ENCODE measurements at regions of chr1 and their contacts with region 1.

Region 1: DNA sequence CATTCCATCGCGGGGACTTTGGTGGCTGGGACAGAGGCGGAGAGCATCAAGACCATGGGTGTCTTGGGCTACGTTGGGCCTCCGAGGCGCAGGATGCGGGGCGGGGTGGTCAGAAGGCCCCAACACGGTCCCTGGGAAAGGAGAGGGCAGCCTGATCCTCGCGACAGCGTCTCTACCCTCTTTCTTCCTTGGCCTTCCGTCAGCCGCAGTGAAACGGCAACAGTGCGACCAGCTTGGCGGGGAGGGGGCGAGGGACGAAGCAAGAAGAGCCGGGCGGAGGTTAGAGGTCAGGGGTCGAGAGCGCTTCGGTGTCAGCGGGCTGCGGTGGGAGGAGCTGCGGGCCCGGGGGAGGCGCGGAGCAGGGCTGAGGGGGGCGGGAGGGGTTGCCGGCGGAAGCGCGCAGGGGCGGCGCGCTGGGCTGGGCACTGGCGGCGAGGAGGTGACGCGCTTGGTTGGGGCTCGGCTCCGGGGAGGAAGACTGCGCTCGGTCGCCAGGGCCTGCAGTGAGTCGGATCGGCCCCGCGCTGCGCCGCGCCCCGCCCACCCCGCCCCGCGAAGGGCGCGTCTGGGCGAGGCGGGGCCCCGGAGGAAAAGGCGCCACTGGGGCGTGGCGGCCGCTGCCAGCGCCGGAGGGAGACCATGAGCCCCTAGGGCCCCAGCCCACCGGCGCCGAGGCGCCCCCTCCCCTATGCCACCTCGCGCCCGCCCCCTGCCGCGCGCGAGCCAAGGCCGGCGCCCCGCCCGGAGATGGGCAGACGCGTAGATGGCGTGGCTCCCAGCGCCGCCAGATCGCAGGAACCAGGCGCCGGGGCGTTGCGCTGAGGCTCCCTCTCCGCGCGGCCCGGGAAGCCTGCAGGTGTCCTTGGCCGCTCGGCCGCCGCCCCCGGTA is at the start of gene KCNC4:
- DNase-seq: peak; percentile 87
- ATAC-seq: peak; percentile 75
- H3K4me3 Mint-ChIP-seq: peak within 1 kb of the TSS; percentile 82
- H3K27ac Mint-ChIP-seq: peak within 1 kb of the TSS; percentile 92
- H3K4me1 Mint-ChIP-seq: peaks cover 33% of the 10 kb centered on the region
- H3K27me3 Mint-ChIP-seq: peaks cover 22% of the 10 kb centered on the region
- CTCF ChIP-seq: no peak
- total RNA-seq, gene KCNC4: 19.9 to 21.9 TPM (median 21.9 TPM) in 3 replicates

Region 2: DNA sequence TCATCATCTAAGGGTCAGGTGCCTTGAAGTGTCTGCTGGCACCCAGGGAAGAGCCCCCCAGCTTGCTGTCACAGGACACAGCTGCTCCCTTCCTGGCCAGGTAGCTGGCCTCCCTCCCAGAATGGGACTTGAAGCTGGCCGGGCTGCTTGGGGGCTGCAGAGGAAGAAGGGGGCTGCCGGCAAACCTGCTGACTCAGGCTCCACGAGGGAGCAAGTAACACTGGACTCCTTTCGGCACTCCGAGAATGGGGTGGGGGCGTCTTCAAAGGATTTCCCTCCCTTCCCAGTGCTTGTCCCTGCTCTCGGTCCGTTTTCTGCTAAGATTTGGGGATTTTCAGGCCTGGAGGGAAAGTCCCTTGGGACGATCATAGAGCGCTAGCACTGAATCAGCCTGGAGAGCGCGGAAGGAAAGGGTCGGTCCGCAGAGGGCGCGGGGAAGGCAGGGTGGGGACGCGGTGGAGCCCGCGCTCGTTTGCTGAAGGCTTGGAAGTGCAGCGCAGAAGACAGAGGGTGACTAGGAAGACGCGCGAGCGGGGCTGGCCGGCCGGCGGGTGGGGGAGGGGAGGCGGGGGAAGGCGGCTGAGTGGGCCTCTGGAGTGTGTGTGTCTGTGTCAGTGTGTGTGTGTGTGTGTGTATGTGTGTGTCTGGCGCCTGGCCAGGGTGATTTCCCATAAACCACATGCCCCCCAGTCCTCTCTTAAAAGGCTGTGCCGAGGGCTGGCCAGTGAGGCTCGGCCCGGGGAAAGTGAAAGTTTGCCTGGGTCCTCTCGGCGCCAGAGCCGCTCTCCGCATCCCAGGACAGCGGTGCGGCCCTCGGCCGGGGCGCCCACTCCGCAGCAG is 299.6 kb before region 1 on chr1 and contains the start of gene CSF1:
- CTCF ChIA-PET with region 1: no interaction called
- POLR2A ChIA-PET with region 1: no interaction called
- DNase-seq: peak; percentile 55
- ATAC-seq: peak; percentile 62
- H3K4me3 Mint-ChIP-seq: peak within 1 kb of the TSS; percentile 82
- H3K27ac Mint-ChIP-seq: no peak within 1 kb of the TSS
- H3K4me1 Mint-ChIP-seq: peaks cover 31% of the 10 kb centered on the region
- H3K27me3 Mint-ChIP-seq: peaks cover 56% of the 10 kb centered on the region
- CTCF ChIP-seq: no peak
- total RNA-seq, gene CSF1: 2.5 to 3.3 TPM (median 3.0 TPM) in 3 replicates

Region 3: GRCh38 chr1:110060034-110060661 is 149.8 kb before region 1 on chr1:
- CTCF ChIA-PET with region 1: no interaction called
- POLR2A ChIA-PET with region 1: no interaction called
- DNase-seq: peak; percentile 81
- ATAC-seq: peak; percentile 87
- H3K4me3 Mint-ChIP-seq: no peak overlapping the region
- H3K27ac Mint-ChIP-seq: no peak overlapping the region
- H3K4me1 Mint-ChIP-seq: no peaks in the 10 kb centered on the region
- H3K27me3 Mint-ChIP-seq: peaks cover 12% of the 10 kb centered on the region
- CTCF ChIP-seq: peak; percentile 96

Region 4: GRCh38 chr1:110229348-110230001 is 19.5 kb after region 1 on chr1:
- CTCF ChIA-PET with region 1: interaction called, 16 read pairs
- POLR2A ChIA-PET with region 1: interaction called, 3 read pairs
- DNase-seq: no peak
- ATAC-seq: peak; percentile 59
- H3K4me3 Mint-ChIP-seq: no peak overlapping the region
- H3K27ac Mint-ChIP-seq: peak overlapping the region; percentile 66
- H3K4me1 Mint-ChIP-seq: peaks cover 4% of the 10 kb centered on the region
- H3K27me3 Mint-ChIP-seq: no peaks in the 10 kb centered on the region
- CTCF ChIP-seq: no peak

Region 5: GRCh38 chr1:110254996-110255787 is 45.2 kb after region 1 on chr1:
- CTCF ChIA-PET with region 1: interaction called, 26 read pairs
- POLR2A ChIA-PET with region 1: no interaction called
- DNase-seq: peak; percentile 25
- ATAC-seq: peak; percentile 92
- H3K4me3 Mint-ChIP-seq: no peak overlapping the region
- H3K27ac Mint-ChIP-seq: no peak overlapping the region
- H3K4me1 Mint-ChIP-seq: peaks cover 12% of the 10 kb centered on the region; the same call in 1 of the 2 replicates
- H3K27me3 Mint-ChIP-seq: peaks cover 20% of the 10 kb centered on the region
- CTCF ChIP-seq: no peak

Region 6: GRCh38 chr1:110298991-110299390 is 89.0 kb after region 1 on chr1:
- CTCF ChIA-PET with region 1: interaction called, 24 read pairs
- POLR2A ChIA-PET with region 1: no interaction called
- DNase-seq: no peak
- ATAC-seq: no peak
- H3K4me3 Mint-ChIP-seq: no peak overlapping the region
- H3K27ac Mint-ChIP-seq: no peak overlapping the region
- H3K4me1 Mint-ChIP-seq: 0 out of 2 replicates have a peak, but pooled peaks cover 2% of the 10 kb centered on the region
- H3K27me3 Mint-ChIP-seq: peaks cover 5% of the 10 kb centered on the region
- CTCF ChIP-seq: no peak

Region 7: DNA sequence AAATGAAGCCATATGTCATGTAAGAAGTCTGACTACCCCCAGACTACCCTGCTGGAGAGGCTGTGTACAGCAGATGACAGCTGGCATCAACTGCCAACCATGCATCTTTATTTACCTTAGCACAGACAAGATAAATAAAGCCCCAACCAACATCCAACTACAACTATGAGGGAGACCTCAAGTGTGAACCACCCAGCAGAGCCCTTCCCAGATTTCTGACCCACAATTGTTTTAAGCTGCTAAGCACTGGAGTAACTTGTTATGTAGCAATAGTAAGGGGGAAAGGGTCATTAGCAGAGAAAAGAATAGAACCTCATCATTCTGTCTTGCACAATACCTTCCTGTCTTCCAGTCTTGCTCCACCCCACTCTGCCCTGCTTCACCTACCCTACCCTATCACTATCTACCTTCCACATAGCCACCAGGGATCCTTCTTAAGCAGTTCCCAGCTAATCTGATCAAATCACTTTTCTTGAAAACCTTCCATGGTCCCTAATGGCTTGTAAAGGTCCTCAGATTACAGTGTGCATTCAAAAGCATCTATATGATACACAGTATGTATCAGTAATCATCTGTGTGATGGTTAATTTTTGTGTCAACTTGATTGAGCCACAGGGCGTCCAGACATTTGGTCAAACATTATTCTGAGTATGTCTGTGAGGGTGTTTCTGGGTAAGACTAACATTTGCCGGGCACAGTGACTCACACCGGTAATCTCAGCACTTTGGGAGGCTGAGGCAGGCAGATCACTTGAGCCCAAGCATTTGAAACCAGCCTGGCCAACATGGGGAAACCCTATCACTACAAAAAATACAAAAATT is 109.6 kb after region 1 on chr1:
- CTCF ChIA-PET with region 1: interaction called, 30 read pairs
- POLR2A ChIA-PET with region 1: interaction called, 3 read pairs
- DNase-seq: no peak
- ATAC-seq: no peak
- H3K4me3 Mint-ChIP-seq: no peak overlapping the region
- H3K27ac Mint-ChIP-seq: no peak overlapping the region
- H3K4me1 Mint-ChIP-seq: no peaks in the 10 kb centered on the region
- H3K27me3 Mint-ChIP-seq: no peaks in the 10 kb centered on the region
- CTCF ChIP-seq: no peak

Region 8: GRCh38 chr1:110393691-110394564 is 184.0 kb after region 1 on chr1:
- CTCF ChIA-PET with region 1: no interaction called
- POLR2A ChIA-PET with region 1: no interaction called
- DNase-seq: no peak
- ATAC-seq: no peak
- H3K4me3 Mint-ChIP-seq: no peak overlapping the region
- H3K27ac Mint-ChIP-seq: no peak overlapping the region
- H3K4me1 Mint-ChIP-seq: peaks cover 18% of the 10 kb centered on the region
- H3K27me3 Mint-ChIP-seq: no peaks in the 10 kb centered on the region
- CTCF ChIP-seq: no peak

Region 9: DNA sequence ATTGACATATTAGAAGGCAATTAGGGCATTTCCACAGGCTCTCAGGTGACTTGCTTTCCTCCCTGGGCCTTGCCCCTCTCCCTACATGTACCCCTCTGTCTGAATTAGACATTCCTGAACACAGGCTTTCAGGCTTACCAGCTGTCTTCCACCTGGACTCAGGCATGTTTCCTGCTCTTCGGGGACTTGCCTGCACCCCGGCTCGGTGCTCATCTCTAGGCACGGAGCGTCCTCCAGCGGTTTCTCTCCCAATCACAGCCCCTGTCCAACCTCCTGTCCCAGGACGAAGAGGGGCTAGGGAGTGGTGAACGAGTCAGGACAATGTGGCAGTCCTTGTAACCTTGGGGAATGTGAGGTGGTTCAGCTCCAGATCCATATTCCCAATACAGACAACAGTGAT is 245.2 kb after region 1 on chr1:
- CTCF ChIA-PET with region 1: interaction called, 132 read pairs
- POLR2A ChIA-PET with region 1: no interaction called
- DNase-seq: peak; percentile 74
- ATAC-seq: peak; percentile 90
- H3K4me3 Mint-ChIP-seq: no peak overlapping the region
- H3K27ac Mint-ChIP-seq: peak overlapping the region; percentile 63; the same call in 1 of the 2 replicates
- H3K4me1 Mint-ChIP-seq: peaks cover 15% of the 10 kb centered on the region
- H3K27me3 Mint-ChIP-seq: no peaks in the 10 kb centered on the region; the same call in 1 of the 2 replicates
- CTCF ChIP-seq: no peak

Region 10: DNA sequence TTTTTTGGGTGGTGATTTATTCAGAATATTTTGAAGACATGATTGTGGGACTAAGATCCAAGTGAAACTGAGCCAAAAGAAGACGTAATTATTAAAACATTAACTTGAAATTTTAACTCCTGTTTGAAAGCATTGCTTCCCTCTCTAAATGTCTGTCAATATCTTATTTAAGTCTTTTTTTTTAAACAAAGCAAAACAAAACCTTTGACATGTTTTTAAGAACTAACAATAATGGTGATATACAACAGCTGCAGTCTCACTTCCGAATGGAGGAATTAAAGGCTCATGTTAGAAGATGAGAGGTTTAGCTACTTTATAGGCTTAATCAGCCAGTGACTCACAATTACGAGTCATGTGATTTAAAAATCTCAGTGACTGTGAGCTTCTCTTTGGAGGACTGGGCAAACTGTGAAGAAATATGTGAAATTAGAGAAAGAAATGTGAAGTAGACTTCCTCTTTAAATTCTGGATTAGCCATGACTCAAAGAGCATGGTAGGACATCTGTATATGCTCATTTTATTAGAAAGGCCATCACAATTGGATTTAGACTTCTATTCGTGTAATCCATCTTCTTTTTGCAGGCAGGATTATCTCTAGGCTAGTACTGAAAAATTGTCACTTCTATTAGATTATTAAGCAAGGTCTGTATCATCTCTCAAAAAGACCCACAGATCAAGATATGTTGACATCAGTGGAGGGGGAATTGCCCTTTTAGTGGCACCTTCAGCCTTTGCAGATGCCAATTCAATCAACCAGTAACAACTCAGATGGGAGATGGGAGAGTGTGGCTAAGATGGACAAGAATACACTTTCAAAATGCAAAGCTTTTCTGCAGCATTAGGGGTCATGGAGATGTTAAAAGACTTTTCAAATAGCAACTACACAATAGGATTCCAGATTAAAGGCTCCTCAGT is 436.1 kb after region 1 on chr1:
- CTCF ChIA-PET with region 1: no interaction called
- POLR2A ChIA-PET with region 1: no interaction called
- DNase-seq: no peak
- ATAC-seq: no peak
- H3K4me3 Mint-ChIP-seq: no peak overlapping the region
- H3K27ac Mint-ChIP-seq: no peak overlapping the region
- H3K4me1 Mint-ChIP-seq: no peaks in the 10 kb centered on the region
- H3K27me3 Mint-ChIP-seq: peaks cover 6% of the 10 kb centered on the region; the same call in 1 of the 2 replicates
- CTCF ChIP-seq: no peak